ENCODE measurements at regions of chr3 and their contacts with region 1.

Region 1: GRCh38 chr3:183385698-183386613 is 42.5 kb downstream of the MCF2L2 start:
- DNase-seq: peak; percentile 68 to 81 (median 80)
- H3K4me3 ChIP-seq: no peak overlapping the region
- H3K4me3 Mint-ChIP-seq: no peak overlapping the region
- H3K27ac ChIP-seq: no peak overlapping the region
- H3K27ac Mint-ChIP-seq: peak overlapping the region in 2 of 7 donors; percentile 16 to 30
- H3K4me1 ChIP-seq: peaks cover 16 to 19% of the 10 kb centered on the region in 2 donors
- H3K4me1 Mint-ChIP-seq: peaks cover 19% of the 10 kb centered on the region
- H3K27me3 ChIP-seq: no peaks in the 10 kb centered on the region
- H3K27me3 Mint-ChIP-seq: peaks cover 0 to 2% (median 0%) of the 10 kb centered on the region in 3 donors
- CTCF ChIP-seq: peak; percentile 78

Region 2: GRCh38 chr3:183285828-183286457 is 100.0 kb before region 1 on chr3:
- intact Hi-C with region 1: loop called (anchors 1 to 10 kb)
- DNase-seq: peak; percentile 97 to 100 (median 99)
- H3K4me3 ChIP-seq: peak overlapping the region in 1 of 3 experiments; percentile 30
- H3K4me3 Mint-ChIP-seq: peak overlapping the region; percentile 48 to 56
- H3K27ac ChIP-seq: peak overlapping the region; percentile 44 to 85
- H3K27ac Mint-ChIP-seq: peak overlapping the region; percentile 87 to 96 (median 93)
- H3K4me1 ChIP-seq: peaks cover 24 to 29% of the 10 kb centered on the region in 2 donors
- H3K4me1 Mint-ChIP-seq: peaks cover 34% of the 10 kb centered on the region
- H3K27me3 ChIP-seq: no peaks in the 10 kb centered on the region
- H3K27me3 Mint-ChIP-seq: peaks cover 0 to 2% (median 1%) of the 10 kb centered on the region in 3 donors
- CTCF ChIP-seq: no peak

Region 3: DNA sequence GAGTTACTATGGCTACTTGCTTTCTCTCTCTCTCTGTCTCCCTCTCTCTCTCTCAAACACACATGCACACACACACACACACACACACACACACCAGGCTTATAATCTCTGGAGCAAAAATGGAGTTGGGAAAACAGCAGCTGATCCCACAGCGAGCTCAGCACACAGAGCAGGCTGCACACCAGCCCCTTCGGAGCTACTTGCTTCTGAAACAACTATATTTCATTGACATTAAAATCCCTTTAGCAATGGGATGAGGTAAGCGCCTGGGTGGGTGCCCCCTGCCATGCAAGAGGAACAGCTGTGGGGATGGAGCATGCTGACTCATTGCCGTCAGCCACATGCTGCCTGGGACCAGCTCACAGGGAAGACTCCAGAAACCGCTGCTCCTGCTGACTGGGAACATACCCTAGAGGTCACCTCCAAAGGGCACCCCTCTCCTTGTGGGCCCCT is 87.2 kb before region 1 on chr3:
- intact Hi-C with region 1: loop called in 1 of 2 experiments (anchors 10 kb)
- DNase-seq: peak; percentile 76 to 93 (median 86)
- H3K4me3 ChIP-seq: peak overlapping the region in 1 of 3 experiments; percentile 21
- H3K4me3 Mint-ChIP-seq: peak overlapping the region; percentile 61 to 71
- H3K27ac ChIP-seq: peak overlapping the region in 1 of 2 donors; percentile 37
- H3K27ac Mint-ChIP-seq: peak overlapping the region; percentile 77 to 94 (median 92)
- H3K4me1 ChIP-seq: peaks cover 46 to 49% of the 10 kb centered on the region in 2 donors
- H3K4me1 Mint-ChIP-seq: peaks cover 60% of the 10 kb centered on the region
- H3K27me3 ChIP-seq: no peaks in the 10 kb centered on the region
- H3K27me3 Mint-ChIP-seq: peaks cover 0 to 3% (median 3%) of the 10 kb centered on the region in 3 donors
- CTCF ChIP-seq: no peak

Measured in CD14-positive monocyte (primary cell).